H1 (cell line): ENCODE measurements at regions of chr1 and their contacts with region 1.

Region 1: GRCh38 chr1:228457396-228458176 is 29.6 kb upstream of the RNF187 start:
- DNase-seq: peak; percentile 80 to 94
- H3K4me3 ChIP-seq: peak overlapping the region; percentile 63 to 93 (median 87)
- H3K27ac ChIP-seq: peak overlapping the region; percentile 91
- H3K4me1 ChIP-seq: peaks cover 0 to 2% (median 0%) of the 10 kb centered on the region in 4 experiments; a peak in 2 of 7 replicates
- H3K27me3 ChIP-seq: 0 out of 7 replicates have a peak, but pooled peaks cover 0 to 2% (median 0%) of the 10 kb centered on the region in 4 experiments
- CTCF ChIP-seq: peak; percentile 38 to 54 (median 45)
- EP300 ChIP-seq: no peak
- POLR2A ChIP-seq: peak; percentile 97
- RAD21 ChIP-seq: peak in 1 of 2 experiments; percentile 43; a peak in 3 of 4 replicates

Region 2: DNA sequence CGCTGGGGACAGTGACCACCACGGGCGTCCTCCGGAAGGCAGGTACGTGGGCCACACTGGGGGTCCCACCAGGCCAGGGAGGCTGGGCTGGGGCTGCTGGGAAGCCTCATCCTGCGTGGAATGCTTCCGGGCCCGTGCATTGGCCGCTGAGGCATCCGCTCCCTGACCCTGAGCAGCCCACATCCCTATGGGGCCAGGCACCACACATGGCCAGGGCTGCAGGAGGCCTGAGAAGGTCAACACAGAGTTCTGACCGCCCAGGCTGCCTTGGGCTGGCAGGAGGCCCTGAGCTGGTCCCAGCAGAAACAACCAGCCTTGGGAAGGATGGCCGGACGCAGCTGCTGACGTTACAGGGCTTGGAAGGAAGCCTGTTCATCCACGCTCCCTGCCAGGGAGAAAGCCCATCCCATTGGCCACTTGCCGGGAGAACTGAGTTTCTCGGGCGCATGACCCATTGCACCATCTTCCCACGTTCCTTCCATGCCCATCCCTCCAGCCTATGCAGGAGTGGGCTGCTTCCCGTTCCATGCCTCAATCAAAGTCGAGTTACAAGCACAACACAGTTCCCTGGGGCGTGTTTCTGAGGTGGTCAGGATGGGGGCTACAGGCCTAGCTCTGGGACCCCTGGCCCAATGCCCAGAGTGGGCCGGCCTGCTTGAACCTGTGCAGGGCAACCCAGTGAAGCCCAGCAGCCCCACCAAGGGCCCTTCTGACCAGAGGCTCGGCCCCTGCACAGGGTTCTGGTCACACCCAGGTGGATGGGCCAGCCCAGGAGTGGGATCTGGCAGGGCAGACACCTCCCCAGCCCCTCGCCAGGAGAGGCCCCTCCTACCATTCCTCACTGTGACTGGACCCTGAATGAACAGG is 82.6 kb before region 1 on chr1:
- CTCF ChIA-PET with region 1: interaction called, 10 read pairs
- POLR2A ChIA-PET with region 1: interaction called, 12 read pairs
- DNase-seq: no peak
- H3K4me3 ChIP-seq: no peak overlapping the region
- H3K27ac ChIP-seq: no peak overlapping the region
- H3K4me1 ChIP-seq: peaks cover 0 to 10% (median 5%) of the 10 kb centered on the region in 4 experiments; a peak in 5 of 7 replicates
- H3K27me3 ChIP-seq: peaks cover 2 to 17% (median 11%) of the 10 kb centered on the region in 4 experiments; a peak in 6 of 7 replicates
- CTCF ChIP-seq: no peak
- EP300 ChIP-seq: no peak
- POLR2A ChIP-seq: no peak
- RAD21 ChIP-seq: no peak

Region 3: GRCh38 chr1:228416217-228416933 is 41.2 kb before region 1 on chr1 and contains the start of gene TRIM17:
- CTCF ChIA-PET with region 1: interaction called, 8 read pairs
- POLR2A ChIA-PET with region 1: interaction called, 22 read pairs
- DNase-seq: peak in 1 of 2 experiments; percentile 89
- H3K4me3 ChIP-seq: peak within 1 kb of the TSS; percentile 30 to 60 (median 58)
- H3K27ac ChIP-seq: no peak within 1 kb of the TSS
- H3K4me1 ChIP-seq: peaks cover 2 to 9% (median 6%) of the 10 kb centered on the region in 4 experiments
- H3K27me3 ChIP-seq: peaks cover 3 to 64% (median 35%) of the 10 kb centered on the region in 4 experiments
- CTCF ChIP-seq: peak; percentile 55 to 63 (median 56)
- EP300 ChIP-seq: no peak
- POLR2A ChIP-seq: no peak
- RAD21 ChIP-seq: peak; percentile 33 to 46; a peak in 2 of 4 replicates
- total RNA-seq, gene TRIM17: 2.2 and 2.3 TPM in 2 replicates

Region 4: DNA sequence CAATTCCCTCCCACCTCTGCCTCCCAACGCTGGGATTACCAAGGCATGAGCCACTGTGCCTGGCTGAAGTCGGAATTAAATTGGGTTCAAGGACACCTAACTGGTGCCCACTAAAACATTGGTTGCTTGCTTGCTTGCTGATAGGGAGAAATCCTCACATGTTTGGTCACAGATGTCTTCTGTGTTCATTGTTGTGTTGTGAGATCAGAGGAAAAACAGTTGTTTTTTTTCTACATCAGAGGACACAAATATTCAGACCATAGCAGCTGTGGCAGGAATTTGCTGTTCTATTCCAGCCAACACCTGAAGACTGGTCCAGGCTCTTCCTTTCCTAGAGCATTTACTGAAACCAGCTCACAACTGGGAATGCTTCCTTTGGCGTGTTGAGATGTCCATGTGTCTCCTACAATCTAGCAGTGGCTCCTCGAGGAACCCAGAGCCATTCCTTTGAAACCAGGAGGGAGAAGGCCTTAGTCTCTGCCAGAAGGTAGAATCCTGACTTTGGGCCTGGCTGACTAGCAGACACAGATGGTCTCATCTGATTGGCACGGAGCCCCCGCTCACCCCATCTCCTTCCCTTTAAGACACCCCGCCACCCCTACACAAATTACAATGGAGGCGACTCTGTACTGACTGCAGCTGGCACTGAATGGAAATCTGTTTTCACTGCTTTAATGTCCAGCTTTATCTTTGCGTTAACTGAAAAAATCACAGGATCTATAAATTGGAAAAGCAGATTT is 16.7 kb before region 1 on chr1:
- CTCF ChIA-PET with region 1: interaction called, 23 read pairs
- POLR2A ChIA-PET with region 1: interaction called, 82 read pairs
- DNase-seq: no peak
- H3K4me3 ChIP-seq: no peak overlapping the region
- H3K27ac ChIP-seq: no peak overlapping the region
- H3K4me1 ChIP-seq: peaks cover 0 to 4% (median 0%) of the 10 kb centered on the region in 4 experiments; a peak in 2 of 7 replicates
- H3K27me3 ChIP-seq: peaks cover 22 to 86% (median 57%) of the 10 kb centered on the region in 4 experiments
- CTCF ChIP-seq: no peak
- EP300 ChIP-seq: no peak
- POLR2A ChIP-seq: no peak
- RAD21 ChIP-seq: no peak

Region 5: GRCh38 chr1:228471762-228472398 is 14.3 kb after region 1 on chr1:
- CTCF ChIA-PET with region 1: interaction called, 117 read pairs
- POLR2A ChIA-PET with region 1: interaction called, 232 read pairs
- DNase-seq: no peak
- H3K4me3 ChIP-seq: no peak overlapping the region
- H3K27ac ChIP-seq: no peak overlapping the region
- H3K4me1 ChIP-seq: peaks cover 3 to 22% (median 15%) of the 10 kb centered on the region in 4 experiments; a peak in 6 of 7 replicates
- H3K27me3 ChIP-seq: peaks cover 2 to 28% (median 15%) of the 10 kb centered on the region in 4 experiments
- CTCF ChIP-seq: peak in 2 of 3 experiments; percentile 64 to 68; a peak in 3 of 4 replicates
- EP300 ChIP-seq: no peak
- POLR2A ChIP-seq: no peak
- RAD21 ChIP-seq: peak; percentile 50 to 70

Region 6: DNA sequence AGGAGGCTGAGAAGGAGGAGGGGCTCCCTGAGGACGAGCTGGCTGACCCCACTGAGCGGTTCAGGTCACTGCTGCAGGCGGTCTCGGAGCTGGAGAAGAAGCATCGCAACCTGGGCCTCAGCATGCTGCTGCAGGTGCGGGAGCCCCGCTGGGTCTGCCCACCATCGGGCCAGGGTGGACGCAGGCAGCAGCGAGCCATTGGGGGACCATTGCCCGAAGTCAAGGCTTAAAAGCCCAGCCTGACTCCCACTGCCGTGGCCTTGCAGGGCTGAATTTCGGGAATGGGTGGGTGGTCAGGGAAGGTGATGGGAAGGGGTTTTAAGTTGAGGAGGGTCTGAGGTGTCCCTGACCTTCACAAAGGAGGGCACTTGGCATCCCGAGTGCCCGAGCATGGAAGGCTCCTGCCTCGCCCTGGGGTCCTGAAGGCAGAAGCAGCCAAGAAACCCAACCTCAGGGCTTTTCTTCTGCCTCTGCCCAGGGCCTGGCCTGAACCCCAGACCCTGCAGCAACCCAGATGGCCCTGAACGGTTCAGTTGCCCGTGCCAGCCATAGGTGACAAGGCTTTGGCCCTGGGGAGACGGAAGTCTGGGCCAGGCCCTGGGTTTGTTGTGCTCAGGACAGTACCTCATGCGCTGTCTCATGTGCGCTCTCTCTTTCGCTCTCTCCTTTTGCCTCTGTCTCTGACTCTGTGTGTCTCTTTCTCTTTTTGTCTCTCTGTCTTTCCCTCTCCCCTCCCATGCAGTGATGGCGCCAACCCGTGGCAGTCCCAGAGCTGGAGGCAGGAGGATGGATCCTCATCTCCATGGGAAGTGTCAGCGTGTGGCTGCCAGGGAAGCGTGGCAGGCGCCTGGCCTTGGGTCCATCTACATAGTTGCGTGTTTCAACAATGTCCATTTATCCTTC is 35.8 kb after region 1 on chr1:
- CTCF ChIA-PET with region 1: no interaction called
- POLR2A ChIA-PET with region 1: interaction called, 82 read pairs
- DNase-seq: no peak
- H3K4me3 ChIP-seq: no peak overlapping the region
- H3K27ac ChIP-seq: no peak overlapping the region
- H3K4me1 ChIP-seq: peaks cover 0 to 6% (median 5%) of the 10 kb centered on the region in 4 experiments; a peak in 6 of 7 replicates
- H3K27me3 ChIP-seq: no peaks in the 10 kb centered on the region
- CTCF ChIP-seq: peak; percentile 25 to 35 (median 26); a peak in 3 of 4 replicates
- EP300 ChIP-seq: no peak
- POLR2A ChIP-seq: no peak
- RAD21 ChIP-seq: peak; percentile 40 to 51

Region 7: DNA sequence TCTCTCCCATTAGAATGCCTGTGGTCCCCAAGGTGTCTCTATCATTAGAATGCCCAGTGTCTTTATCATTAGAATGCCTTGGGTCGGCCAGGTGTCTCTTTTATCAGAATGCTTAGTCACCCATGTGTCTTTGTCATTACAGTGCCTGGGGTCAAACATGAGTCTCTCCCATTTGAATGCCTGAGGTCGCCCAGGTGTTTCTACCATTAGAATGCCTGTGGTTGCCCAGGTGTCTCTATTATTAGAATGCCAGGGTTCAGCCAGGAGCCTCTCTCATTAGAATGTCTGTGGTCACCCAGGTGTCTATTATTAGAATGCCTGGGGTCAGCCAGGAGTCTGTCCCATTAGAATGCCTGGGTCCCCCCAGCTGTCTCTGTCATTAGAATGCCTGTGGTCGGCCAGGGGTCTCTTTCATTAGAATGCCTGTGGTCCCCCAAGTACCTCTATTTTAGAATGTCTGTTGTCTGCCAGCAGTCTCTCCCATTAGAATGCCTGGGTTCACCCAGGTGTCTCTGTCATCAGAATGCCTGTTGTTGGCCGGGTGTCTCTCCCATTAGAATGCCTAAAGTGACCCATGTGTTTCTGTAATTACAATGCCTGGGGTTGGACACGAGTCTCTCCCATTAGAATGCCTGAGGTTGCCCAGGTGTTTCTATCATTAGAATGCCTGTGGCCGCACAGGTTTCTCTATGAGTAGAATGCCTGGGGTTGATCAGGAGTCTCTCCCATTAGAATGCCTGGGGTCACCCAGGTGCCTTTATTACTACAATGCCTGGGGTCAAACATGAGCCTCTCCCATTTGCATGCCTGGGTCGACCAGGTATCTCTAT is 86.7 kb after region 1 on chr1:
- CTCF ChIA-PET with region 1: no interaction called
- POLR2A ChIA-PET with region 1: no interaction called
- DNase-seq: no peak
- H3K4me3 ChIP-seq: no peak overlapping the region
- H3K27ac ChIP-seq: no peak overlapping the region
- H3K4me1 ChIP-seq: no peaks in the 10 kb centered on the region
- H3K27me3 ChIP-seq: peaks cover 29 to 66% (median 60%) of the 10 kb centered on the region in 4 experiments
- CTCF ChIP-seq: no peak
- EP300 ChIP-seq: no peak
- POLR2A ChIP-seq: no peak
- RAD21 ChIP-seq: no peak